Caco-2 (cell line): ENCODE measurements at regions of chr6 and their contacts with region 1.

Region 1: GRCh38 chr6:18527836-18528743 is 140.9 kb downstream of the RNF144B start:
- DNase-seq: no peak
- H3K4me3 ChIP-seq: no peak overlapping the region
- H3K4me3 Mint-ChIP-seq: no peak overlapping the region
- H3K27ac Mint-ChIP-seq: no peak overlapping the region
- H3K4me1 ChIP-seq: no peaks in the 10 kb centered on the region
- H3K4me1 Mint-ChIP-seq: no peaks in the 10 kb centered on the region
- H3K27me3 ChIP-seq: no peaks in the 10 kb centered on the region
- H3K27me3 Mint-ChIP-seq: peaks cover 14% of the 10 kb centered on the region
- CTCF ChIP-seq: peak in 1 of 2 experiments; percentile 22

Region 2: GRCh38 chr6:18562726-18563125 is 34.6 kb after region 1 on chr6:
- CTCF ChIA-PET with region 1: no interaction called
- POLR2A ChIA-PET with region 1: no interaction called
- intact Hi-C with region 1: loop called (anchors 1 kb)
- DNase-seq: peak; percentile 45 to 71
- H3K4me3 ChIP-seq: no peak overlapping the region
- H3K4me3 Mint-ChIP-seq: no peak overlapping the region
- H3K27ac Mint-ChIP-seq: no peak overlapping the region
- H3K4me1 ChIP-seq: peaks cover 10% of the 10 kb centered on the region
- H3K4me1 Mint-ChIP-seq: peaks cover 7% of the 10 kb centered on the region
- H3K27me3 ChIP-seq: no peaks in the 10 kb centered on the region
- H3K27me3 Mint-ChIP-seq: peaks cover 12% of the 10 kb centered on the region
- CTCF ChIP-seq: no peak

Region 3: DNA sequence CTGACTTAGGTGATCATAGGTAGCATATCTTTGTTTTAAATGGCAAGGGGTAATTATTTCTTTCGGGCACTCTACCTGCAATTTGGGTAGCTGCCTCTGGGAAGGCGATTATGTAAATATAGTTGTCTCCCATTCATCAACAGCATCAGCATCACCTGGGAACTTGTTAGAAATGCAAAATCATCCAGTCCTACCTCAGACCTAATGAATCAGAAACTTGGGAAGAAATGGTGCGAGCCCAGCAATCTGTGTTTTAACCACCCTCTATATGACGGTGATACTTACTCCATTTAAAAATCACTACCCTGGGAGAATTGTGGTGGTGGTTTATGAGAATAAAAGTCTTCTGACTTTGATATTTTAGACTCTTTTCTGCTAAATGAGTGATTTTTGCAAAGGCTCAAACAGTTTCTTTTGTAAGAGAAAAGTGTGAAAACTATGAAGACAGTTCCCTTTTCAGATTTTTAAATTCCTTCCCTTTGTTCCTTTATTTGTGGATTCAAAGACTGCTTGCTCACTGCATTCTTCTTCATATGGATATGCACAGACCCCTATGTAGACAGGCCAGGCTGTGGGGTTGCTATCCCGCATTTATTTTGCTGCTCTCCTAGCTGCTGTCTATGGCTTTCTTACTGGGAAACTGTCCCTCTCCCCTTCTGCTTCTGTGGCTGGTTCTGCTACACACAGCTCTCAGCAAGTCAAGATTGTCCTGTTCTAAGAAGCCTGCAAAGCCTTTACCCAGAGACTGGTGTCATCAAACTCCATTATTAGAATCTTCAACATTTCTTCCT is 224.4 kb after region 1 on chr6:
- CTCF ChIA-PET with region 1: no interaction called
- POLR2A ChIA-PET with region 1: no interaction called
- intact Hi-C with region 1: loop called (anchors 5 kb)
- DNase-seq: no peak
- H3K4me3 ChIP-seq: no peak overlapping the region
- H3K4me3 Mint-ChIP-seq: no peak overlapping the region
- H3K27ac Mint-ChIP-seq: no peak overlapping the region
- H3K4me1 ChIP-seq: no peaks in the 10 kb centered on the region
- H3K4me1 Mint-ChIP-seq: peaks cover 7% of the 10 kb centered on the region
- H3K27me3 ChIP-seq: no peaks in the 10 kb centered on the region
- H3K27me3 Mint-ChIP-seq: peaks cover 18% of the 10 kb centered on the region
- CTCF ChIP-seq: no peak